ENCODE measurements at regions of chr18 and their contacts with region 1.

Region 1: GRCh38 chr18:3447895-3448837 is 1.8 kb upstream of the TGIF1 start:
- DNase-seq: peak; percentile 97
- H3K4me3 ChIP-seq: peak overlapping the region; percentile 60
- H3K4me3 Mint-ChIP-seq: peak overlapping the region; percentile 87
- H3K27ac Mint-ChIP-seq: peak overlapping the region; percentile 97
- H3K4me1 ChIP-seq: peaks cover 14% of the 10 kb centered on the region
- H3K4me1 Mint-ChIP-seq: no peaks in the 10 kb centered on the region
- H3K27me3 ChIP-seq: no peaks in the 10 kb centered on the region
- H3K27me3 Mint-ChIP-seq: no peaks in the 10 kb centered on the region
- CTCF ChIP-seq: peak in 1 of 2 experiments; percentile 48

Region 2: DNA sequence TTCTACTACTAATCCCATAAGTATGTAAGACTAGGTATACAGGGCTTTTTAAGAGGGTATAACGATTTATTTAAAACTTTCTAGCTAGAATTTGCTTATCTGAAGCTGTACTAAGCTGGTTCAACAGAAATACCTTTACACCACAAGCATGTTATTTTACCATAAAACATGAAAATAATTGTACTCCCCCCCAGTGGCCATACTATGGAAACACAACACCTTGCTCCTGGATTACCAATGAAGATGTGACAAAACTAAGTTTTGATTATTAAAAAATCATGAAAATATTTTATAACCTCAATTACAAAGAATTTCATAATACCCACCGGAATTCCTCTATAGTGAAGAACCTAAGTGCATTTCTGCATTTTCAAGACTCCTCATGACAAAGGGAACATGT is 462.5 kb before region 1 on chr18:
- CTCF ChIA-PET with region 1: no interaction called
- POLR2A ChIA-PET with region 1: no interaction called
- intact Hi-C with region 1: no loop called
- DNase-seq: peak in 1 of 2 experiments; percentile 44
- H3K4me3 ChIP-seq: no peak overlapping the region
- H3K4me3 Mint-ChIP-seq: no peak overlapping the region
- H3K27ac Mint-ChIP-seq: no peak overlapping the region
- H3K4me1 ChIP-seq: peaks cover 52% of the 10 kb centered on the region
- H3K4me1 Mint-ChIP-seq: peaks cover 39% of the 10 kb centered on the region
- H3K27me3 ChIP-seq: no peaks in the 10 kb centered on the region
- H3K27me3 Mint-ChIP-seq: no peaks in the 10 kb centered on the region
- CTCF ChIP-seq: peak; percentile 46 to 56

Region 3: DNA sequence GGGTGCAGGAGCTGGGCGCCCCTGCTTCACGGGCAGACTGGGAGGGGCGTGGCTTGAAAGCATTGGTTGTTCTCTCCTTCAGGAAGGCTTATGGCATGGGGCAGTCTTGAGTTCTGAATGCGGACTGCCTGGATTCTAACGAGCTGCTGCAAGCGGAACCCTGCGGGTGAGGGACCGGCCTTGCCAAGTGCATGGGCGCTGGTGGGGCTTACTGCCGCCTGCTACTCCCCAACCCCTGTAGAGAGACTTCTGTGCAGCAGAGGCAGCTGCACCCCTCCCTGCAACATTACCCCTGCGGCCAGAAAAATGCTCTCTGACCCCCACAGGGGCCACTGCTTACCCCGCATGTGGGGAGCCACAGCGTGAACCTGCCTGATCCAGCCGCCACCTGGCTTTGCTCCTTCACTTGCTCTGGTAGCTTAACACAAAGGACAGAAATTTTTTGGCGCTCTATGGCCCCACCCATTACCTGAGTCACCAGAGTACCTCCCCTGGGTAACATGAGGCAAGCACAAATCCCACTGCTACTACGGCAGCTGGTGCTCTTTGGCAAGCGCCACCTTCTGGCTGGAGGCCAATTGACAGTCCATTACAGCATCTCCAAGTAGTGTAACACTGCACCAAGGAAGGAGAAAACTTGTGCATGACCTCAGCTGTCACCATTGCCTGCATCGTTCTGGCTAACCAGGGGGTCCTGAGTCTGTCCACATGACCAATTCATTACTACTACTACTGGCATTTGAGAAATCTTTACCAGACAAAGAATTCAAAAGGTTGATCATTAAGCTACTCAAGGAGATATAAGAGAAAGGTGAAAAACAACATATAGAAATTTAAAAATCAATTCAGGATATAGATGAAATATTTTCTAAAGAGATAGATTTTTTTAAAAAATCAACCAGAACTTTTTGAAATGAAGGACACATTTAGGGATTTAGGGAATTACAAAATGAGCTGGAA is 150.9 kb before region 1 on chr18:
- CTCF ChIA-PET with region 1: interaction called, 11 read pairs
- POLR2A ChIA-PET with region 1: interaction called, 12 read pairs
- intact Hi-C with region 1: loop called (anchors 2 kb)
- DNase-seq: peak; percentile 94 to 95
- H3K4me3 ChIP-seq: peak overlapping the region; percentile 70
- H3K4me3 Mint-ChIP-seq: peak overlapping the region; percentile 93
- H3K27ac Mint-ChIP-seq: peak overlapping the region; percentile 89
- H3K4me1 ChIP-seq: no peaks in the 10 kb centered on the region
- H3K4me1 Mint-ChIP-seq: peaks cover 7% of the 10 kb centered on the region
- H3K27me3 ChIP-seq: no peaks in the 10 kb centered on the region
- H3K27me3 Mint-ChIP-seq: peaks cover 4% of the 10 kb centered on the region
- CTCF ChIP-seq: peak; percentile 87 to 94

Region 4: GRCh38 chr18:3350566-3351527 is 97.3 kb before region 1 on chr18:
- CTCF ChIA-PET with region 1: no interaction called
- POLR2A ChIA-PET with region 1: no interaction called
- intact Hi-C with region 1: no loop called
- DNase-seq: no peak
- H3K4me3 ChIP-seq: no peak overlapping the region
- H3K4me3 Mint-ChIP-seq: no peak overlapping the region
- H3K27ac Mint-ChIP-seq: no peak overlapping the region
- H3K4me1 ChIP-seq: no peaks in the 10 kb centered on the region
- H3K4me1 Mint-ChIP-seq: no peaks in the 10 kb centered on the region
- H3K27me3 ChIP-seq: no peaks in the 10 kb centered on the region
- H3K27me3 Mint-ChIP-seq: no peaks in the 10 kb centered on the region
- CTCF ChIP-seq: no peak

Region 5: DNA sequence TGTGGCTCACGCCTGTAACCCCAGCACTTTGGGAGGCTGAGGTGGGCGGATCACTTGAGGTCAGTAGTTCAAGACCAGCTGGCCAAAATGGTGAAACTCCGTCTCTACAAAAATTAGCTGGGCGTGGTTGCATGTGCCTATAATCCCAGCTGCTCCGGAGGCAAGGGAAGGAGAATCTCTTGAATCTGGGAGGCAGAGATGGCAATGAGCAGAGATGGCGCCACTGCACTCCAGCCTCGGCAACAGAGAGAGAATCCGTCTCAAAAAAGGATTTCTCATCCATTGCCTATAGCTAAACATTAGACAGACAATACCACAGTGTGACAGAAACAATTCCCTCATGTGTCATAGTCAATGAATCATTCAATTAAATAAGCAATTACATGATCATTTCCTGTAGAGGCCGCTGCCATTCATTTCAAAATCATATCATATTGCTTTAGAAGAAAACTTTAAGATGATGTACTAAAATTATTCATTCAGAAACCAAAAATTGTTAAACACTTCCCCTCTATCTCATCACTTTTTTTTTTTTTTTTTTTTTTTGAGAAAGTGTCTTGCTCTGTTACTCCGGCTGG is 67.7 kb before region 1 on chr18:
- CTCF ChIA-PET with region 1: no interaction called
- POLR2A ChIA-PET with region 1: interaction called, 5 read pairs
- intact Hi-C with region 1: loop called (anchors 2 kb)
- DNase-seq: no peak
- H3K4me3 ChIP-seq: no peak overlapping the region
- H3K4me3 Mint-ChIP-seq: no peak overlapping the region
- H3K27ac Mint-ChIP-seq: no peak overlapping the region
- H3K4me1 ChIP-seq: peaks cover 15% of the 10 kb centered on the region
- H3K4me1 Mint-ChIP-seq: peaks cover 13% of the 10 kb centered on the region
- H3K27me3 ChIP-seq: no peaks in the 10 kb centered on the region
- H3K27me3 Mint-ChIP-seq: no peaks in the 10 kb centered on the region
- CTCF ChIP-seq: no peak

Region 6: DNA sequence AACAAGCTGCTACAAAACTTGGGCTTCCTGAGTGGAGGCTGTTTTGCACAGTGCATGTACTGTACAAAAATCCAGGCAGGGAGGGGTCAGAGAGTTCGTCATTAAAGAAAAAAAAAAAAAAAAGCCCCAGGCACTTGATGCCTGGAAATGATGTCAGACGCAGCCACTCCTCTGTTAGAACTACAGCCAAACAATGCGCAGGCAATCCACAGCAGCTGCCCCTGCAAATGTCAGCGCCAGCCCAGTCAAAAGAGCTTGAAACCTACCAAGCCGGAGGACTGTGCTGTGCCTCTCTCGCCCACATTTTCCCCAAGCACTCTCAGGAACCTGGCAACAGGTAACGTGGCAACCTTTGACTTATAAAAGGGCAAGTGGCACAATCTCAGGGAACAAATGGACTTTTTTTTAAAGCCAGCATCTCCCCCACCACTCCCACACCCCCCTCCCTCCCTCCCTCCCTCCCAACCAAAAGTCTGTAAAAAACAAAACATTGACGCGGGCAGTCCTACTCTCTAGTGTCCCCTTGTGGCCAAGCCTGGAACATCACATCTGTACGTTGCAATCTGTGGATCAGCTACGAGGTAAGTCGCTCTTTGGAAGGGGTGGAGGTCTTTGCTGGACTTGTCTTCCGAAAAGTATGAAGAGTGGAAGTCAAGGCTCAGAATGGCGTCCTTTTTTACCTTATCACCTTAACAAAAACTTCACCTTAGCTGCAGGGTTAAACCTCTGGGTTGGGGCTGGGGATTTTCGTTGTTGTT is 145.9 kb after region 1 on chr18:
- CTCF ChIA-PET with region 1: interaction called, 7 read pairs
- POLR2A ChIA-PET with region 1: interaction called, 8 read pairs
- intact Hi-C with region 1: loop called (anchors 2 kb)
- DNase-seq: peak; percentile 89 to 90
- H3K4me3 ChIP-seq: peak overlapping the region; percentile 39
- H3K4me3 Mint-ChIP-seq: peak overlapping the region; percentile 85
- H3K27ac Mint-ChIP-seq: peak overlapping the region; percentile 87
- H3K4me1 ChIP-seq: peaks cover 47% of the 10 kb centered on the region
- H3K4me1 Mint-ChIP-seq: peaks cover 47% of the 10 kb centered on the region
- H3K27me3 ChIP-seq: no peaks in the 10 kb centered on the region
- H3K27me3 Mint-ChIP-seq: no peaks in the 10 kb centered on the region
- CTCF ChIP-seq: peak; percentile 85 to 93